ENCODE measurements at regions of chr1 and their contacts with region 1.

Region 1: GRCh38 chr1:32005522-32005921 is 8.1 kb upstream of the KHDRBS1 start:
- DNase-seq: no peak
- ATAC-seq: no peak
- H3K4me3 Mint-ChIP-seq: no peak overlapping the region
- H3K27ac Mint-ChIP-seq: no peak overlapping the region
- H3K4me1 Mint-ChIP-seq: peaks cover 8% of the 10 kb centered on the region
- H3K27me3 Mint-ChIP-seq: peaks cover 4% of the 10 kb centered on the region

Region 2: DNA sequence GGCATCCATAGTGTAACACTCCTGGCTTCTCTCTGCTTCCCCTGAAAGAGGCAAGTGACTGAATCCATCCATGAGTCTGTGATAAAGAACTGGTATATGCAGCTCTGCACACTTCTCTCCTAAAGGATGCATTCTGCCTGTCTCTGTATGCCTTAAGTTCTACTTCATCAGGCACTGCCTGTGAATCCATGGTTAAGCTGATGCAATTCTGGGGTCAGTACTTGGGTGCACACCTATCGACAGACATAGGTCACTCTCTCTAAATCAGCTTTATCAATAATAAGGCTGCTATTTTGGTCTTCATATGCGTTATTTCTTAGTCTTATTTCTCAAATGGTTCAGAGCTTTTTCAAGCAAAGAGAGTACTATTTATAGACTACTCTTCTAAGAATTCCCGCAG is 34.6 kb before region 1 on chr1:
- CTCF ChIA-PET with region 1: interaction called, 13 read pairs
- DNase-seq: no peak
- ATAC-seq: no peak
- H3K4me3 Mint-ChIP-seq: no peak overlapping the region
- H3K27ac Mint-ChIP-seq: no peak overlapping the region
- H3K4me1 Mint-ChIP-seq: peaks cover 11% of the 10 kb centered on the region
- H3K27me3 Mint-ChIP-seq: peaks cover 2% of the 10 kb centered on the region

Region 3: GRCh38 chr1:31984419-31985347 is 20.8 kb before region 1 on chr1:
- CTCF ChIA-PET with region 1: interaction called, 32 read pairs
- DNase-seq: peak; percentile 53
- ATAC-seq: peak; percentile 79
- H3K4me3 Mint-ChIP-seq: peak overlapping the region; percentile 17
- H3K27ac Mint-ChIP-seq: peak overlapping the region; percentile 87
- H3K4me1 Mint-ChIP-seq: peaks cover 48% of the 10 kb centered on the region
- H3K27me3 Mint-ChIP-seq: no peaks in the 10 kb centered on the region